ENCODE measurements at regions of chr22 and their contacts with region 1.

Region 1: GRCh38 chr22:31561238-31561887 is 65.0 kb downstream of the SFI1 start:
- DNase-seq: peak; percentile 51
- ATAC-seq: peak; percentile 68
- H3K4me3 ChIP-seq: no peak overlapping the region
- H3K4me3 Mint-ChIP-seq: no peak overlapping the region
- H3K27ac ChIP-seq: no peak overlapping the region
- H3K27ac Mint-ChIP-seq: no peak overlapping the region
- H3K4me1 ChIP-seq: no peaks in the 10 kb centered on the region
- H3K4me1 Mint-ChIP-seq: peaks cover 1% of the 10 kb centered on the region
- H3K27me3 ChIP-seq: no peaks in the 10 kb centered on the region
- H3K27me3 Mint-ChIP-seq: no peaks in the 10 kb centered on the region
- CTCF ChIP-seq: peak; percentile 66

Region 2: DNA sequence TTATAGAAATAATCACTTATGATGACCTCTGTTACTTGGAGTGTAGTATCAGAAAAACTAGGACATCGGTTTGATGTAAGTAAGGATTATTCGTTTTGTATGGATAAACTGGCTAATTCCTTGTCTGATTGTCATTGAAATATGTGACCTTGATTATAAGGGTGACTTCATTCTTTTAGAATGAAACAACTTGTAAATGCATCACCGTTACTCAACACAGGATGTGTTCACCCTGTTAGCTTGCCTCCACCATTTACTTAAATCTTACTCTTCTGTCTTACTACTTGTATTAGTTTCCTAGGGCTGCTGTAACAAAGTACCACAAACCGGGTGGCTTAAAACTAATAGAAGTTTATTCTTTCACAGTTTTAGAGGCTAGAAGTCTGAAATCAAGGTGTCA is 57.1 kb before region 1 on chr22:
- CTCF ChIA-PET with region 1: no interaction called
- POLR2A ChIA-PET with region 1: no interaction called
- intact Hi-C with region 1: loop called (anchors 10 kb)
- DNase-seq: no peak
- ATAC-seq: no peak
- H3K4me3 ChIP-seq: no peak overlapping the region
- H3K4me3 Mint-ChIP-seq: no peak overlapping the region
- H3K27ac ChIP-seq: no peak overlapping the region
- H3K27ac Mint-ChIP-seq: no peak overlapping the region
- H3K4me1 ChIP-seq: no peaks in the 10 kb centered on the region
- H3K4me1 Mint-ChIP-seq: peaks cover 10% of the 10 kb centered on the region
- H3K27me3 ChIP-seq: no peaks in the 10 kb centered on the region
- H3K27me3 Mint-ChIP-seq: no peaks in the 10 kb centered on the region
- CTCF ChIP-seq: no peak

Region 3: DNA sequence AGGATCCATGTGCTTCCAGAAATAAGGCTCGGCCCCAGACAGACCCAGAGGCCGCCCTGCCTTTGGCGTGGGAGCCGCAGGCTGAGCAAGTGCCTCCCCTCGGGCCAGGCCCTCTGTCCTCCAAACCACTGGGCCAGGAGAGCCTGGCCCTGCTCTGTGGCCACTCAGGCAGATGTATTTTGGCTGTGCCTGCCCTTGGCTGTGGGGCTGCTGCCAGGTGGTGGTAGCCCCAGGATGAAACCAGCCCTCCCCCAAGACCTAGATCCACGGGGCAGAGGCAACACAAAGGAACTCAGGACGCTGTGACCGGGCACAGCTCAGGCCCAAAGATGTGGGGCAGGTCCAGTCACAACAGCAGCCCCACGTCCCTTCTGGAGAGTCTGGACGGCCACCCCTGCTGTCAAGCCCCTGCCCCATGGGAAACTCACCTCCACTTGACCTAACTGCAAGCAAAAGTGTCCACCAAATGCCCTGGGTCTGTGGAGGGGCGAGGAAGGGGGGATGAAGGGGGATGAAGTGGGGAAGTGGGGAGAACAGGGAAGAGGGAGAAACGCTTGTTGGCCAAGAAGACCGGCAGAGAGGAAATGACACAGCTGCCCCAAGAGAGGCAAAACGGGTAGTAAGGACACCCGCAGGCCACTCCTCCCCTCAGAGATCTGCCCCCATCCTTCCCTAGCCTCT is 76.7 kb after region 1 on chr22:
- CTCF ChIA-PET with region 1: interaction called, 88 read pairs
- POLR2A ChIA-PET with region 1: no interaction called
- intact Hi-C with region 1: loop called (anchors 1 kb)
- DNase-seq: peak; percentile 67
- ATAC-seq: peak; percentile 68
- H3K4me3 ChIP-seq: peak overlapping the region; percentile 17 to 84 (median 38)
- H3K4me3 Mint-ChIP-seq: peak overlapping the region; percentile 90
- H3K27ac ChIP-seq: peak overlapping the region; percentile 64 to 86
- H3K27ac Mint-ChIP-seq: peak overlapping the region; percentile 92
- H3K4me1 ChIP-seq: peaks cover 31 to 46% of the 10 kb centered on the region in 2 donors
- H3K4me1 Mint-ChIP-seq: peaks cover 50% of the 10 kb centered on the region
- H3K27me3 ChIP-seq: no peaks in the 10 kb centered on the region
- H3K27me3 Mint-ChIP-seq: no peaks in the 10 kb centered on the region
- CTCF ChIP-seq: no peak